ENCODE measurements at regions of chr10 and their contacts with region 1.

Region 1: DNA sequence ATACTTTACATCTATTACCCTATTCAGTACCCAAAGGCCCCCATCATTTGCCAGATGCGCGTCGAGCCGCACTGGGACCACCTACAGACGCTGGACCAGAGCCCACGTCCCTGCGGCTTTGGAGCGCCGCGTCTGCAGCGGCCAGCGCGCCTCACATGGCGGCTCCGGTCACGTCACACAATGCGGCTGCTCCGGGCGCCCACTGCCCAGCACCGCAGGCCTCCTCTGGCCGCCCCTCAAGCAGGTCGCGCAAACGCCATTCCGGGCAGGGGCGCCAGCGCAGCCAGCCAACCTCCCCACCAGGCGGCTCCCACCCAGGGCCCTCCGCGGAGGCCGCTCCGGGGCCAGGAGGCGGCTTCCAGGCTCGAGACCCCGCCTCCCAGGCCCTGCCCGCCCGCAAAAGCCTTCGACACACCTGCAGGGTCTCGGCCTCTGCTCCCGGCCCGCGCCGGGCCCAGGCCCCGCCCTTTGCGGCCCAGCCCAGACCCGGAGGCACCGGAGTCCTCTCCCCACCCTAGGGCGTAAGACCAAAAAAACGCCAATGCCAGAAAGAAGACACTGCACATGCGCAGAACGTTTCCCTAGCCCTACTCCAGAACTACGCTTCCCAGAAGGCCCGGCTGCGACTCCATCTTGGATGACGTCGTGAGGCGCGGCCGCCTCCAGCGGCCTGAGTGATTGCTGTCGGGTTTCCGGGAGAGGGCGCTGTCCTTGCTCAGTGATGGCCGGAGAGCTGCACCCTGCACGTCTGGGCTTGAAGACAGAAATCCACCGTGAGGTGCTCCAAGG is at the start of gene ZNF25:
- DNase-seq: peak; percentile 94 to 99
- ATAC-seq: peak; percentile 96 to 98
- H3K4me3 ChIP-seq: peak within 1 kb of the TSS; percentile 58
- H3K27ac ChIP-seq: peak within 1 kb of the TSS; percentile 80 to 92
- H3K4me1 ChIP-seq: peaks cover 4% of the 10 kb centered on the region; the same call in 1 of the 3 replicates
- CTCF ChIP-seq: peak; percentile 92
- EP300 ChIP-seq: no peak
- POLR2A ChIP-seq: peak; percentile 83
- RAD21 ChIP-seq: peak; percentile 59 to 70
- polyA plus RNA-seq, gene ZNF25: 6.5 and 7.3 TPM in 2 replicates

Region 2: GRCh38 chr10:37992083-37992482 is 15.8 kb after region 1 on chr10:
- CTCF ChIA-PET with region 1: interaction called, 10 read pairs
- POLR2A ChIA-PET with region 1: no interaction called
- DNase-seq: no peak
- ATAC-seq: no peak; a peak in 1 of 6 replicates
- H3K4me3 ChIP-seq: no peak overlapping the region
- H3K27ac ChIP-seq: no peak overlapping the region
- H3K4me1 ChIP-seq: no peaks in the 10 kb centered on the region
- CTCF ChIP-seq: no peak
- EP300 ChIP-seq: no peak
- POLR2A ChIP-seq: no peak
- RAD21 ChIP-seq: no peak

Region 3: GRCh38 chr10:38010119-38010903 is 34.0 kb after region 1 on chr10 and contains the start of gene ZNF33A:
- CTCF ChIA-PET with region 1: interaction called, 8 read pairs
- POLR2A ChIA-PET with region 1: interaction called, 11 read pairs
- DNase-seq: peak; percentile 76 to 96
- ATAC-seq: peak; percentile 95 to 97
- H3K4me3 ChIP-seq: peak within 1 kb of the TSS; percentile 61
- H3K27ac ChIP-seq: peak within 1 kb of the TSS; percentile 93 to 97
- H3K4me1 ChIP-seq: peaks cover 12% of the 10 kb centered on the region; the same call in 2 of the 3 replicates
- CTCF ChIP-seq: no peak
- EP300 ChIP-seq: no peak
- POLR2A ChIP-seq: peak; percentile 74
- RAD21 ChIP-seq: no peak
- polyA plus RNA-seq, gene ZNF33A: 16.5 and 18.7 TPM in 2 replicates

Region 4: DNA sequence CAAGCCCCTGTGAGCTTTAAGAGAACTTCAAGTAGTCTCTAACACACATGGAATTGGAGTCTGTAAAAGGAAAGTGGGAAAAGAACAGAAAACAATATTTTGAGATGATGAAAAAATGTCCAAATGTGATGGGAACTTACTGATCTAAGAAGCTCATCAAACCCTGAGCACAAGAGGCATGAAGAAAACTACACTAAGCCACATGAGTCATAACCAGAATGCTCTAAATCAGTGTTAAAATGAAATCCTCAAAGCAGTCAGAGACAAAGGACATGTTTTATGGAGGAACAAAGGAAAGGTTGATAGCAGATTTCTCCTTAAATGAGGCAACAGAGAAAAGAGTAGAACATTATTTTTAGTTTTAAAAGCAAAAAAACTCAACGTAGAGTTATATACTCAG is 71.4 kb after region 1 on chr10:
- CTCF ChIA-PET with region 1: no interaction called
- POLR2A ChIA-PET with region 1: no interaction called
- DNase-seq: no peak
- ATAC-seq: no peak
- H3K4me3 ChIP-seq: no peak overlapping the region
- H3K27ac ChIP-seq: no peak overlapping the region
- H3K4me1 ChIP-seq: no peaks in the 10 kb centered on the region
- CTCF ChIP-seq: no peak
- EP300 ChIP-seq: no peak
- POLR2A ChIP-seq: no peak
- RAD21 ChIP-seq: no peak

Region 5: DNA sequence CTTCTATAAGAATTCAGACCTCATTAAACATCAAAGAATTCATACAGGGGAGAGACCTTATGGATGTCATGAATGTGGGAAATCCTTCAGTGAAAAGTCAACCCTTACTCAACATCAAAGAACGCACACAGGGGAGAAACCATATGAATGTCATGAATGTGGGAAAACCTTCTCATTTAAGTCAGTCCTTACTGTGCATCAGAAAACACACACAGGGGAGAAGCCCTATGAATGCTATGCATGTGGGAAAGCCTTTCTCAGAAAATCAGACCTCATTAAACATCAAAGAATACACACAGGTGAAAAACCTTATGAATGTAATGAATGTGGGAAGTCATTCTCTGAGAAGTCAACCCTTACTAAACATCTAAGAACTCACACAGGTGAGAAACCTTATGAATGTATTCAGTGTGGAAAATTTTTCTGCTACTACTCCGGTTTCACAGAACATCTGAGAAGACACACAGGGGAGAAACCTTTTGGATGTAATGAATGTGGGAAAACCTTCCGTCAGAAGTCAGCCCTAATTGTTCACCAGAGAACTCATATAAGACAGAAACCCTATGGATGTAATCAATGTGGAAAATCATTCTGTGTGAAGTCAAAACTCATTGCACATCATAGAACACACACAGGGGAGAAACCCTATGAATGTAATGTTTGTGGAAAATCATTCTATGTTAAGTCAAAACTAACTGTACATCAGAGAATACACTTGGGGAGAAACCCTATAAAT is 142.0 kb after region 1 on chr10:
- CTCF ChIA-PET with region 1: no interaction called
- POLR2A ChIA-PET with region 1: no interaction called
- DNase-seq: peak in 1 of 2 experiments; percentile 64
- ATAC-seq: no peak
- H3K4me3 ChIP-seq: no peak overlapping the region
- H3K27ac ChIP-seq: no peak overlapping the region
- H3K4me1 ChIP-seq: no peaks in the 10 kb centered on the region
- CTCF ChIP-seq: no peak
- EP300 ChIP-seq: no peak
- POLR2A ChIP-seq: no peak
- RAD21 ChIP-seq: no peak

Measured in A549 (cell line).